OCI-LY7 (cell line): ENCODE measurements at regions of chr1 and their contacts with region 1.

Region 1: DNA sequence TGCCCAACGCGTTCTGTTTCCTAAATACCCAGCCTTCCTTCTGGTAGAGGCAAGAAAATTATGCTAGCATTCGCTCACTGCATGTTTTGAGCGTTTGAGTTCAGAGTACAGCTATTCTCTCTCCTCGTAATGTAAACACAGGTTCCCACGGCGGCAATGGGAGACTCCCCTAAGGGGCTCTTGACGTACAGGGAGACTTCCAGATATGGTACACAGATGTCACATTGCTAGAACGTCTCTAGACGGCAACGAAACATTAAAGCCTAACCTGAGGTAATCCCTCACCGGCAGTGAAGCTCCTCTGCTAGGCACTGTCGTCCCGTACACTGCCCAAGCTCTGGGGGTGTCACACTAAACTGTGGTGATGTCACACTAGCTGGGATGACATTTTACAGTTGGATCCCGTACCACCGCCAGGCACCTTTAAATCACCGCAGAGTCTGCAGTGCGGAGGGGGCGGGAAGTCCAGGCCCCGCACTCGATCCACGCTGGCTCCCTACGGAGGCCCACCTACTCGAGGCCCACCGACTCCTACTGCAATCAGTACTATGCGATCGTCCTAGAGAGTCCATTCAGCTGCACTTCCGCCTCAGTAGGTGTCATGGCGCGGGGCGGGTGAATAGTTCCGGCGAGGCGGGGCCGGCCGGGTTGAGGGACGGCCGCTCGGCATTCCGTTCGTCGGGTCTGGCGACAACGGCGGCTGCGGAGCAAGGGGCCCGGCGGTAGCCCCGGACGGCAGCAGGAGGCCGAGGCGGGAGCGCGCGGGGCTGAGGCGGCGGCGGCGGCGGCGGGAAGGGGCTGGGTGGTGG is at the start of gene HIPK1:
- DNase-seq: peak; percentile 96
- H3K4me3 ChIP-seq: peak within 1 kb of the TSS; percentile 96
- H3K27ac ChIP-seq: peak within 1 kb of the TSS; percentile 75
- H3K4me1 ChIP-seq: peaks cover 51% of the 10 kb centered on the region
- CTCF ChIP-seq: no peak
- total RNA-seq, gene HIPK1: 17.3 and 20.4 TPM in 2 replicates

Region 2: GRCh38 chr1:113759333-113760101 is 169.6 kb before region 1 on chr1 and contains the start of gene PHTF1:
- CTCF ChIA-PET with region 1: no interaction called
- POLR2A ChIA-PET with region 1: no interaction called
- intact Hi-C with region 1: loop called (anchors 1 kb)
- DNase-seq: peak; percentile 75
- H3K4me3 ChIP-seq: peak within 1 kb of the TSS; percentile 86
- H3K27ac ChIP-seq: peak within 1 kb of the TSS; percentile 58
- H3K4me1 ChIP-seq: peaks cover 20% of the 10 kb centered on the region
- CTCF ChIP-seq: no peak
- total RNA-seq, gene PHTF1: 7.1 and 11.8 TPM in 2 replicates

Region 3: GRCh38 chr1:113904674-113905434 is 24.3 kb before region 1 on chr1 and contains the starts of genes AP4B1 and DCLRE1B:
- CTCF ChIA-PET with region 1: interaction called, 6 read pairs
- POLR2A ChIA-PET with region 1: interaction called, 68 read pairs
- intact Hi-C with region 1: loop called (anchors 1 kb)
- DNase-seq: peak; percentile 100
- H3K4me3 ChIP-seq: peak within 1 kb of the TSS; percentile 99
- H3K27ac ChIP-seq: peak within 1 kb of the TSS; percentile 77
- H3K4me1 ChIP-seq: peaks cover 27% of the 10 kb centered on the region
- CTCF ChIP-seq: peak; percentile 71
- total RNA-seq, gene AP4B1: 37.7 and 45.3 TPM in 2 replicates
- total RNA-seq, gene DCLRE1B: 17.3 and 20.1 TPM in 2 replicates

Region 4: DNA sequence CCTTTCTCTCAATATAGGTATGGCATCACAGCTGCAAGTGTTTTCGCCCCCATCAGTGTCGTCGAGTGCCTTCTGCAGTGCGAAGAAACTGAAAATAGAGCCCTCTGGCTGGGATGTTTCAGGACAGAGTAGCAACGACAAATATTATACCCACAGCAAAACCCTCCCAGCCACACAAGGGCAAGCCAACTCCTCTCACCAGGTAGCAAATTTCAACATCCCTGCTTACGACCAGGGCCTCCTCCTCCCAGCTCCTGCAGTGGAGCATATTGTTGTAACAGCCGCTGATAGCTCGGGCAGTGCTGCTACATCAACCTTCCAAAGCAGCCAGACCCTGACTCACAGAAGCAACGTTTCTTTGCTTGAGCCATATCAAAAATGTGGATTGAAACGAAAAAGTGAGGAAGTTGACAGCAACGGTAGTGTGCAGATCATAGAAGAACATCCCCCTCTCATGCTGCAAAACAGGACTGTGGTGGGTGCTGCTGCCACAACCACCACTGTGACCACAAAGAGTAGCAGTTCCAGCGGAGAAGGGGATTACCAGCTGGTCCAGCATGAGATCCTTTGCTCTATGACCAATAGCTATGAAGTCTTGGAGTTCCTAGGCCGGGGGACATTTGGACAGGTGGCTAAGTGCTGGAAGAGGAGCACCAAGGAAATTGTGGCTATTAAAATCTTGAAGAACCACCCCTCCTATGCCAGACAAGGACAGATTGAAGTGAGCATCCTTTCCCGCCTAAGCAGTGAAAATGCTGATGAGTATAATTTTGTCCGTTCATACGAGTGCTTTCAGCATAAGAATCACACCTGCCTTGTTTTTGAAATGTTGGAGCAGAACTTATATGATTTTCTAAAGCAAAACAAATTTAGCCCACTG is 11.5 kb after region 1 on chr1:
- CTCF ChIA-PET with region 1: no interaction called
- POLR2A ChIA-PET with region 1: interaction called, 43 read pairs
- intact Hi-C with region 1: loop called (anchors 1 kb)
- DNase-seq: peak; percentile 55
- H3K4me3 ChIP-seq: peak overlapping the region; percentile 26
- H3K27ac ChIP-seq: peak overlapping the region; percentile 74
- H3K4me1 ChIP-seq: peaks cover 82% of the 10 kb centered on the region
- CTCF ChIP-seq: no peak

Region 5: GRCh38 chr1:113978863-113979702 is 49.9 kb after region 1 on chr1 and contains the start of gene OLFML3:
- CTCF ChIA-PET with region 1: no interaction called
- POLR2A ChIA-PET with region 1: interaction called, 4 read pairs
- intact Hi-C with region 1: loop called (anchors 2 kb)
- DNase-seq: peak; percentile 81
- H3K4me3 ChIP-seq: no peak within 1 kb of the TSS
- H3K27ac ChIP-seq: no peak within 1 kb of the TSS
- H3K4me1 ChIP-seq: peaks cover 17% of the 10 kb centered on the region
- CTCF ChIP-seq: peak; percentile 87
- total RNA-seq, gene OLFML3: 0.21 and 0.44 TPM in 2 replicates